A673 (cell line): ENCODE measurements at regions of chr9 and their contacts with region 1.

Region 1: GRCh38 chr9:35116898-35117551 is 1.4 kb upstream of the ATOSB start:
- DNase-seq: peak; percentile 95
- H3K4me3 ChIP-seq: peak overlapping the region; percentile 53
- H3K27ac ChIP-seq: no peak overlapping the region
- H3K4me1 ChIP-seq: peaks cover 23% of the 10 kb centered on the region
- H3K27me3 ChIP-seq: no peaks in the 10 kb centered on the region
- CTCF ChIP-seq: peak; percentile 91

Region 2: GRCh38 chr9:34701769-34702736 is 415.0 kb before region 1 on chr9:
- CTCF ChIA-PET with region 1: no interaction called
- POLR2A ChIA-PET with region 1: no interaction called
- intact Hi-C with region 1: no loop called
- DNase-seq: peak; percentile 81
- H3K4me3 ChIP-seq: peak overlapping the region; percentile 61
- H3K27ac ChIP-seq: no peak overlapping the region
- H3K4me1 ChIP-seq: no peaks in the 10 kb centered on the region
- H3K27me3 ChIP-seq: peaks cover 5% of the 10 kb centered on the region
- CTCF ChIP-seq: peak; percentile 99

Region 3: DNA sequence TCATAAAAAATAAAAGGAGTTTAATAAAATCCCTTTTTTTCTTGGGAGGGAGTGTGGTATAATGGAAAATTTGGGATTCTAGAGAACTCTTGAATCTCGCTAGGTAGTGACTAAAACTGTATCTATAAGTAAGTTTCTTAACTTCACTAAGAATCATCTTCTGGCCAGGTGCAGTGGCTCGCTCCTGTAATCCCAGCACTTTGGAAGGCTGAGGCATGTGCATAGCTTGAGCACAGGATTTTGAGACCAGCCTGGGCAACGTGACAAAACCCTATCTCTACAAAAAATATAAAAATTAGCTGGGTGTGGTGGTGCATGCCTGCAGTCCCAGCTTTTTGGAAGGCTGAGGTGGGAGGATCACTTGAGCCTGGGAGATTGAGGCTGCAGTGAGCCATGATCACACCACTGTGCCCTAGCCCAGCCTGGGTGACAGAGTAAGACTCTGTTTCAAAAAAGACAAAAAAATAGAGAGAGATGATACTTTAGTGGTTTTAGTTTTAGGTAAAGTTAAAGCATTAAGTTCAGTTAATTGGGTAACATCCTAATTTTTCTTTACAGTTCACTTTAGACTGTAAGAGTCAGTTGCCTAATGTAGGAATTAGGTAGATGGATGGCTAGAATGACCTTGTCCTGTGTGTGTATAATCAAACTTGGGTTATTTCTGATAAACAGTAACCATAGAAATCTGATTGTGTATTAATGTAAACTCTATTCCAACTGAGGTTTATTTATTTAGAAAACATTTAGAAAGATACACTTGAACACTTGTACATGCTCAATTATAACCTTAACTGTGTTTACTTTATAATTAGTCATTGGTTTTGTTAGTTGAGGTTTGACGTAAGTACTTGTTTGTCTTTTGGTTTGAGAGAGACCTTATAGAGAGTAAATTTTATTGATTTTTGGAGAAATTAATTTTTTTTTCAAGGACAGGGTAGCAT is 62.6 kb after region 1 on chr9:
- CTCF ChIA-PET with region 1: no interaction called
- POLR2A ChIA-PET with region 1: no interaction called
- intact Hi-C with region 1: no loop called
- DNase-seq: no peak
- H3K4me3 ChIP-seq: no peak overlapping the region
- H3K27ac ChIP-seq: no peak overlapping the region
- H3K4me1 ChIP-seq: no peaks in the 10 kb centered on the region
- H3K27me3 ChIP-seq: no peaks in the 10 kb centered on the region
- CTCF ChIP-seq: no peak

Region 4: DNA sequence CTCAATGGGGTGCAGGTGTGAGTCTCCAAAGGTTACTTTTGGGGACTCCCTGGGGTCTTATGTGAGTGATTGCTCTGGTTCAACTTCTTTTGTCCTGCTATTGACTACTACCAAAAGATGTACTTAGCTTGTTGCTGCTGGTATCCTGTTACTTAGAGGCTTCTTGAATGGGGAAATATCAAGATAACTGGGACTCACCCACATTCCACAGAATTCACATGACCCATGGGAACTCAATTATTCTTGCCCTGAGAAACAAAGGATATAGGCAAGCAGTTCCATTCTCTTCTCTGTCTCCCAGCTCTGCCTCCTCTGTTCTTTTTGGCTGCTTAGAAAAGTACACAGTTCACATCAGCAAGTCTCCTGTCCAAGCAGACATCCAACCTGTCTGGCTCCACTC is 150.7 kb after region 1 on chr9:
- CTCF ChIA-PET with region 1: no interaction called
- POLR2A ChIA-PET with region 1: no interaction called
- intact Hi-C with region 1: no loop called
- DNase-seq: no peak
- H3K4me3 ChIP-seq: no peak overlapping the region
- H3K27ac ChIP-seq: no peak overlapping the region
- H3K4me1 ChIP-seq: no peaks in the 10 kb centered on the region
- H3K27me3 ChIP-seq: no peaks in the 10 kb centered on the region
- CTCF ChIP-seq: no peak

Region 5: DNA sequence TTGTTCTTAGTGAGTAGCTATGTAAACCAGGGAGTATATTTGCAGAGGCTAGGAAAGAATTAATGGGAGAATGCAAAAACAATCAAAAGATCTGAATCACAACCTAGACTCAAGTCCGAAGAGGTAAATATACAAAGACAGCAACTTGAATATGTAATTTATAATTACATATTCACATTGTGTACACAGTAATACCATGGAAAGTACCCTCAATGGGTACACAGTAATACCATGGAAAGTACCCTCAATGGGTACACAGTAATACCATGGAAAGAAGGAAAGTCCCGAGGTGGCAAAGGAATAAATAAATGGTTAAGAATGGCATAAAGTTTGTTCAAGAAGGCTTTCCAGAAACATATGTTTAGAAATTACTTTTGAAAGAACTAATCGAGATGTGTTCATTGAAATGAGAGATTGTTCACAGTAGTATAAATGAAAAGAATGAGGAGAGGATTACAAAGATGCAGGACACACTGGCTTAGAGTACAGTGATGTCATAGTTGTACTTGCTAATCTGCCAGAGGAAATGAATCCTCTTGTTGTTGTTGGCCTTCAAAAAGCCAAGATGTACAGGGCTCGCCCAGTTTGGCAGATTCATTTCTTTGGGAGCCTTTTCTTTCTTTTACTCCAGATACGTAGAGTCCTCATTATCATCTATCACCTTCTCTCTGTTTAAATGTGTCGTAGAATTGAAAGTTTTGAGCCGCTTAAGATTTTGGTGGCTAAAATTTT is 160.8 kb after region 1 on chr9:
- CTCF ChIA-PET with region 1: no interaction called
- POLR2A ChIA-PET with region 1: interaction called, 6 read pairs
- intact Hi-C with region 1: loop called (anchors 5 kb)
- DNase-seq: no peak
- H3K4me3 ChIP-seq: no peak overlapping the region
- H3K27ac ChIP-seq: no peak overlapping the region
- H3K4me1 ChIP-seq: no peaks in the 10 kb centered on the region
- H3K27me3 ChIP-seq: no peaks in the 10 kb centered on the region
- CTCF ChIP-seq: no peak

Region 6: GRCh38 chr9:35481347-35481975 is 364.4 kb after region 1 on chr9:
- CTCF ChIA-PET with region 1: interaction called, 5 read pairs
- POLR2A ChIA-PET with region 1: no interaction called
- intact Hi-C with region 1: loop called (anchors 1 kb)
- DNase-seq: peak; percentile 73
- H3K4me3 ChIP-seq: no peak overlapping the region
- H3K27ac ChIP-seq: no peak overlapping the region
- H3K4me1 ChIP-seq: peaks cover under 1% of the 10 kb centered on the region
- H3K27me3 ChIP-seq: no peaks in the 10 kb centered on the region
- CTCF ChIP-seq: peak; percentile 70

Region 7: GRCh38 chr9:35603987-35604577 is 487.1 kb after region 1 on chr9:
- CTCF ChIA-PET with region 1: interaction called, 4 read pairs
- POLR2A ChIA-PET with region 1: no interaction called
- intact Hi-C with region 1: loop called (anchors 5 kb)
- DNase-seq: peak; percentile 100
- H3K4me3 ChIP-seq: peak overlapping the region; percentile 79
- H3K27ac ChIP-seq: peak overlapping the region; percentile 79
- H3K4me1 ChIP-seq: no peaks in the 10 kb centered on the region
- H3K27me3 ChIP-seq: no peaks in the 10 kb centered on the region
- CTCF ChIP-seq: peak; percentile 99